Esophagus squamous epithelium (tissue), 5 donors: ENCODE measurements at regions of chr9 and their contacts with region 1.

Region 1: GRCh38 chr9:133792721-133793470 is 54.7 kb upstream of the SARDH start:
- DNase-seq: no peak
- H3K4me3 ChIP-seq: peak overlapping the region in 1 of 4 donors; percentile 44
- H3K27ac ChIP-seq: no peak overlapping the region
- H3K4me1 ChIP-seq: peaks cover 0 to 34% (median 7%) of the 10 kb centered on the region in 3 donors
- H3K27me3 ChIP-seq: no peaks in the 10 kb centered on the region
- CTCF ChIP-seq: peak; percentile 94 to 97 (median 94)
- POLR2A ChIP-seq: no peak

Region 2: DNA sequence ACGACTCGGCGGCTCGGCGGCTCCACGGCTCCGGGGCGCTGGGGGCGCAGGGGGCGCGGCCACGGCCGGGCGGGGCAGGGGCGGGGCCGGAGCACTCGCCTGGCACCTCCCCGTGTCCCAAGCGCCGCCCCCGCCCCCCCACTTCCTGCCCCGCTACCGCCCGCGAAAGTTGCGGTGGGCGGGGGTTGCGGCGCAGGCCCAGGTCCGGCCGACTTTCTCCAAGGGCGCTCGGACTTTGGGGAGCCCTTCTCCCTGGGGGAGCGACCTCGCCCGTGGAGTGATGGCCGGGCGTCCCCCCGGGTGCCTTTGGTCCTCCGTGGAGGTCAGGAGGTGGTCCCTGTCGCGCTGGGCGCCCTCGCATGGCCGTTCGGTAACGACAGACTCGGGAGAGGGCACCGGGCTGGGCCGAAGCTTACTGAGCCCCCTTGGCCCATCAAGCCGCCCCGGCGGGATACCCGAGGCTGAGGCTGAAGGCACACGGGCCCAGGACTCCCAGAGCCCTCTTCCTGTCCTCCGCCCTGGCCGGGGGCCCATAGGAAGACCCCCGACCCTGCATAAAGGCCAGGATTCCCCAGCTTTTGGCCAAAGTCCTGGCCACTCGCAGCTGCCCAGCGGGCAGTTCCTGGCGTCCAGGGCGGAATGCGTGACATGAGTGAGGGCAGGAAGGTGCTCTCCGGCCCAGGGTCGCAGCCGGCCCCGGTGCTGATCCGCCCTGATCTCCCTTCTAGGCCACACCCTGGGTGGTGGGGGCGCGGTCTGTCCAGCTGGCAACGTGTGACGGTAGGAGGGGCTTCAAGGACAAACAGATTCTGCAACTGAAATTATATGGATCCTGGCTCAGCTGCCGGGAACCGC is 200.1 kb after region 1 on chr9:
- intact Hi-C with region 1: loop called (anchors 5 kb)
- DNase-seq: peak; percentile 35
- H3K4me3 ChIP-seq: peak overlapping the region; percentile 60 to 93 (median 68)
- H3K27ac ChIP-seq: peak overlapping the region; percentile 85 to 97 (median 92)
- H3K4me1 ChIP-seq: peaks cover 28 to 48% (median 36%) of the 10 kb centered on the region in 3 donors
- H3K27me3 ChIP-seq: peaks cover 0 to 44% (median 0%) of the 10 kb centered on the region in 4 donors
- CTCF ChIP-seq: peak; percentile 8 to 47 (median 24)
- POLR2A ChIP-seq: peak in 2 of 4 donors; percentile 26 to 62